Panc1 (cell line): ENCODE measurements at regions of chr2 and their contacts with region 1.

Region 1: GRCh38 chr2:232376713-232377112 is 1.8 kb upstream of the ALPP start:
- DNase-seq: no peak
- ATAC-seq: no peak
- H3K4me3 ChIP-seq: no peak overlapping the region
- H3K27ac ChIP-seq: no peak overlapping the region
- H3K4me1 ChIP-seq: peaks cover under 1% of the 10 kb centered on the region
- H3K27me3 ChIP-seq: no peaks in the 10 kb centered on the region
- CTCF ChIP-seq: no peak

Region 2: DNA sequence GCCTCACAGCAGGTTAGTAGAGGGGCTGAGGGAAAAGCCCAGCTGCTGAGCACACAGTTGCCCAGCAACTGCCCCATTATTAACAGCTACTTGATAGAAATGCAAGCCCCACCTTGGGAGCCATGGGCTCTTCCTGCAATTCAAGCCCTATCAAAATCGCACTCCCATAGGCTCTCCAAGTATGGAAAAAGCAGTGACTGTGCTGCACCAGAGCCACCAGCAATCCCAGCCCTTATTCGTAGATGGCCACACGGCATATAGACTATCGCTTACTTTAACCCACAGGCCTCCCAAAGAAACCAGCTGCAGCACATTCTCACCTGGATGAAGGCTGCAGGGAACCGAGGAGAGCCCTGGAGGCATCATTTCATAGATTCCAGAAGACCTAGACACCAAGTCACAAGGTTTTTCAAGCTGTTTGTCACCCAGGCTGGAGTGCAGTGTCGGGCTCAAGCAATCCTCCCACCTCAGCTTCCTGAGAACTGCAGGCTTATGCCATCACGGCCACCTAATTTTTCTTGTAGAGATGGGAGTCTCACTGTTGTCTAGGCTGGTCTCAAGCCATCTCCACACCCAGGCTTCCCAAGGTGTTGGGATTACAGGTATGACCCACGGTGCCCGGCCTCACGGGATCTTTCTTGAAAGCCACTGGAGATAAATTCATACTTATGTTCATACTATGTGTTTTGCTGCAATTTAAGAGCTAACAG is 923.8 kb before region 1 on chr2:
- CTCF ChIA-PET with region 1: no interaction called
- POLR2A ChIA-PET with region 1: no interaction called
- in situ Hi-C with region 1: no loop called
- intact Hi-C with region 1: no loop called
- DNase-seq: no peak
- ATAC-seq: peak; percentile 69
- H3K4me3 ChIP-seq: no peak overlapping the region
- H3K27ac ChIP-seq: peak overlapping the region; percentile 44; the same call in 1 of the 2 replicates
- H3K4me1 ChIP-seq: peaks cover 31% of the 10 kb centered on the region
- H3K27me3 ChIP-seq: no peaks in the 10 kb centered on the region
- CTCF ChIP-seq: no peak

Region 3: DNA sequence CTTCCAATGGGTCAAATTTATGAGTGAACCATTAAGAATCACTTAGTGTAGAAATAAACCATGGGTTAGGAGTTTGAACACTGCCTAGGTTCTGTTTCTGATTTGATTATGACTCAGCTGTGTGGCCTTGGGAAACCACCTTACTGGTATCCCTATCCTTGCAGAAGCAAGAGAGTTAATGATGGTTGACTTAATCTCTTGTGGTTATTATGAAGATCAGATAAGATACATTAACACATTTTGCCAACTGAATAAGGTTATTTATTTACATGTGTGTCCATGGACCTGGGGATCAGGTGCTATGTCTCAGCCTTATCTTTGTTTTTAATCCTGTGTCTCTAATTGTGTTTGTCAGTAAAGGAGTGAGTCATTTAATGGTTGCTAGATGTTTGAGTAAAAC is 405.1 kb after region 1 on chr2:
- CTCF ChIA-PET with region 1: no interaction called
- POLR2A ChIA-PET with region 1: interaction called, 12 read pairs
- in situ Hi-C with region 1: no loop called
- intact Hi-C with region 1: no loop called
- DNase-seq: peak; percentile 8
- ATAC-seq: peak; percentile 97
- H3K4me3 ChIP-seq: no peak overlapping the region
- H3K27ac ChIP-seq: peak overlapping the region; percentile 67
- H3K4me1 ChIP-seq: peaks cover 47% of the 10 kb centered on the region
- H3K27me3 ChIP-seq: no peaks in the 10 kb centered on the region
- CTCF ChIP-seq: no peak